ENCODE measurements at regions of chr11 and their contacts with region 1.

Region 1: DNA sequence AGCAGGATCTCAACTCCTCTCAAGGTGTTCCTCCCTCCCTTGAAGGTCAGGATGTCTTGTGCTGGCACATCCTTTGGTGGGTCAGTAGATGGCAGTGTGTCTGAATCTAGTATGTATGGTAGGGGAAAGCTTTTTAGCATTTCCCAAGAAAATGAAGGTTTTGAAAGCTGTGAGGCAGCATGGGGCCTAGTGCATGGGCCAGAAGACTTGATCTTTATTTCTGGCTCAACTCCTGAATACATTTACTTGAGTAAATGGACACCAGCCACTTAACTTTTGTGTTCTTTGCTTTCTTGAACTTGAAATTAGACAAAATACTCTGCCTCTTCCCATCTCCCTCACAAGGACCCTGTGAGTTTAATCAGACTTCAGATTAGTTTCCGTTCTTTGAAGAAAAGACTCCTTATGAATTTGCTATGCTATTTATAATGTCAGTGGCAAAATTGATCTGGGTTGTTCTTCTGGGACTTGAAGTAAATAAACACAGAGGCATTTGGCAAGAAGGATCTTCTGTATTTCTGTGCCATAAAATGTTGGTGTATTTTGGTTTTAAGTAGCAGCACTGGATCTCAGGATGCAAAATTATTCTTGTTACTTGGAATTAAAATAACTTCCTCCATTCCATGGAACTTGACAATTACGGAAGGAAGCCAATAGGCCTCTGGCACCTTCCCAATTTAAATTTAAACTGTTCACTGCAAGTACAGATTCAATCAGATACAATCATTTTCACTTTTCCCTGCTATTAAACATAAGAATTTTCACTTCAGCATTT is 288.8 kb downstream of the CASP12 start:
- DNase-seq: peak; percentile 56 to 75
- H3K4me3 ChIP-seq: no peak overlapping the region
- H3K4me3 Mint-ChIP-seq: no peak overlapping the region
- H3K27ac Mint-ChIP-seq: no peak overlapping the region
- H3K4me1 ChIP-seq: 0 out of 2 replicates have a peak, but pooled peaks cover 7% of the 10 kb centered on the region
- H3K4me1 Mint-ChIP-seq: no peaks in the 10 kb centered on the region
- H3K27me3 ChIP-seq: no peaks in the 10 kb centered on the region
- H3K27me3 Mint-ChIP-seq: no peaks in the 10 kb centered on the region
- CTCF ChIP-seq: peak; percentile 76 to 98

Region 2: GRCh38 chr11:104254347-104254746 is 355.2 kb before region 1 on chr11:
- CTCF ChIA-PET with region 1: no interaction called
- POLR2A ChIA-PET with region 1: no interaction called
- intact Hi-C with region 1: loop called (anchors 10 kb)
- DNase-seq: peak; percentile 59 to 67
- H3K4me3 ChIP-seq: no peak overlapping the region
- H3K4me3 Mint-ChIP-seq: no peak overlapping the region
- H3K27ac Mint-ChIP-seq: no peak overlapping the region
- H3K4me1 ChIP-seq: peaks cover 6% of the 10 kb centered on the region
- H3K4me1 Mint-ChIP-seq: peaks cover 16% of the 10 kb centered on the region
- H3K27me3 ChIP-seq: no peaks in the 10 kb centered on the region
- H3K27me3 Mint-ChIP-seq: no peaks in the 10 kb centered on the region
- CTCF ChIP-seq: peak; percentile 63 to 73

Region 3: GRCh38 chr11:104422315-104422944 is 187.1 kb before region 1 on chr11:
- CTCF ChIA-PET with region 1: no interaction called
- POLR2A ChIA-PET with region 1: no interaction called
- intact Hi-C with region 1: no loop called
- DNase-seq: no peak
- H3K4me3 ChIP-seq: no peak overlapping the region
- H3K4me3 Mint-ChIP-seq: no peak overlapping the region
- H3K27ac Mint-ChIP-seq: no peak overlapping the region
- H3K4me1 ChIP-seq: no peaks in the 10 kb centered on the region
- H3K4me1 Mint-ChIP-seq: no peaks in the 10 kb centered on the region
- H3K27me3 ChIP-seq: no peaks in the 10 kb centered on the region
- H3K27me3 Mint-ChIP-seq: no peaks in the 10 kb centered on the region
- CTCF ChIP-seq: no peak

Region 4: GRCh38 chr11:104668797-104669463 is 59.4 kb after region 1 on chr11:
- CTCF ChIA-PET with region 1: no interaction called
- POLR2A ChIA-PET with region 1: no interaction called
- intact Hi-C with region 1: loop called (anchors 1 kb)
- DNase-seq: peak in 1 of 2 experiments; percentile 82
- H3K4me3 ChIP-seq: no peak overlapping the region
- H3K4me3 Mint-ChIP-seq: peak overlapping the region; percentile 20
- H3K27ac Mint-ChIP-seq: peak overlapping the region; percentile 74
- H3K4me1 ChIP-seq: peaks cover 47% of the 10 kb centered on the region
- H3K4me1 Mint-ChIP-seq: peaks cover 51% of the 10 kb centered on the region
- H3K27me3 ChIP-seq: no peaks in the 10 kb centered on the region
- H3K27me3 Mint-ChIP-seq: no peaks in the 10 kb centered on the region
- CTCF ChIP-seq: no peak

Region 5: DNA sequence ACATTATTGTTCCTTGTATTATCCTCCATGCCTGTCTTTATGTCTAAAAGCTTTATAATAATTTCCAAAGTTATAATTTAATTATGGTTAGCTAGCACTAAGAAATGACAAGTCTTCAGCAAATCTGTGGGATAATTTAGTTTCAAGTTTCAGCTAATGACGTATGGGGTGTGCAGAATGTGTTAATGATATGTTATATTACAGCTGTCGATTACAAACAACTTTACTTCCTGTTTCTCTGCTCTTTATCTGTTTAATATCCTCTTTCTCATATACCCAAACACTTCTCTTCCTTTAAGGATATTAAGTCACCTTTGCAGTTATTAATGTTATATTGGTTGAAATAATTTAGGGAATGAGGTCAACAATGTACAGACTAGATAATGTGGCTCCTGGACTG is 127.0 kb after region 1 on chr11:
- CTCF ChIA-PET with region 1: no interaction called
- POLR2A ChIA-PET with region 1: no interaction called
- intact Hi-C with region 1: no loop called
- DNase-seq: no peak
- H3K4me3 ChIP-seq: no peak overlapping the region
- H3K4me3 Mint-ChIP-seq: no peak overlapping the region
- H3K27ac Mint-ChIP-seq: no peak overlapping the region
- H3K4me1 ChIP-seq: peaks cover 8% of the 10 kb centered on the region
- H3K4me1 Mint-ChIP-seq: peaks cover 7% of the 10 kb centered on the region
- H3K27me3 ChIP-seq: no peaks in the 10 kb centered on the region
- H3K27me3 Mint-ChIP-seq: no peaks in the 10 kb centered on the region
- CTCF ChIP-seq: no peak

Region 6: GRCh38 chr11:104841185-104841584 is 231.7 kb after region 1 on chr11:
- CTCF ChIA-PET with region 1: no interaction called
- POLR2A ChIA-PET with region 1: no interaction called
- intact Hi-C with region 1: loop called (anchors 1 kb)
- DNase-seq: no peak
- H3K4me3 ChIP-seq: no peak overlapping the region
- H3K4me3 Mint-ChIP-seq: no peak overlapping the region
- H3K27ac Mint-ChIP-seq: no peak overlapping the region
- H3K4me1 ChIP-seq: no peaks in the 10 kb centered on the region
- H3K4me1 Mint-ChIP-seq: no peaks in the 10 kb centered on the region
- H3K27me3 ChIP-seq: no peaks in the 10 kb centered on the region
- H3K27me3 Mint-ChIP-seq: peaks cover 6% of the 10 kb centered on the region
- CTCF ChIP-seq: peak in 1 of 2 experiments; percentile 12

Region 7: GRCh38 chr11:104968355-104968855 is 358.9 kb after region 1 on chr11 and contains the start of gene CASP4:
- CTCF ChIA-PET with region 1: no interaction called
- POLR2A ChIA-PET with region 1: no interaction called
- intact Hi-C with region 1: loop called (anchors 5 kb)
- DNase-seq: peak in 1 of 2 experiments; percentile 39
- H3K4me3 ChIP-seq: peak within 1 kb of the TSS; percentile 35
- H3K4me3 Mint-ChIP-seq: peak within 1 kb of the TSS; percentile 73
- H3K27ac Mint-ChIP-seq: peak within 1 kb of the TSS; percentile 85
- H3K4me1 ChIP-seq: peaks cover 30% of the 10 kb centered on the region
- H3K4me1 Mint-ChIP-seq: peaks cover 47% of the 10 kb centered on the region
- H3K27me3 ChIP-seq: no peaks in the 10 kb centered on the region
- H3K27me3 Mint-ChIP-seq: no peaks in the 10 kb centered on the region
- CTCF ChIP-seq: no peak
- total RNA-seq, gene CASP4: 41.7 and 42.0 TPM in 2 replicates

Region 8: DNA sequence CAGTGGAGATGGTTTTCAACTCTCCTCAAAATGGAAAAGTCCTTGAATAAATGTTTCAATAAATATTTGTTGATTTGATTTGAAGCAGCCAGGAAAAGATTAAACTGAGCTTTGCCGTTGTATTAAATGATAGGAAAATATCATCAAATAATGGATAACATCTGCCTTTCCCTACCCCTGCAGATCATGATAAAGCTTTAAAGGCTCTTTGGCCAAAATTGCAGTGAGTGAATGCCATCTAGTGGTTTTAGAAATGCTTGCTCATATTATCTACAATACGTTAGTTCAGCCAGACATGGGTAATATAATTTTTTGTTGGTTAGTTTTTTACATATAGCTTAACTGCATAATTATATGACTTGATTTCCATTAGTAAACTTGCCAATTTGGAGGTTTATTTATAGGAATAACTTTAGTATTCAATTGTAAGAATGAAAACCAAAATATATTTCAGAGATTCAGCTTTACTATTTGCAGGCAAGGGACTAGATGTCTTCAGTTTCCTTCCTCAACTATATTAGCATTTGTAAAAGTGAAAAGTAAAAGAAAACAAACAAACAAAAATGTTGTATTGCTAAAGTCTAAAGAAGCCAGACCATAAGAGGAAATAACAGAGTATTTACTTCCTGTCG is 1253.4 kb after region 1 on chr11:
- CTCF ChIA-PET with region 1: interaction called, 3 read pairs
- POLR2A ChIA-PET with region 1: no interaction called
- intact Hi-C with region 1: loop called (anchors 1 kb)
- DNase-seq: peak in 1 of 2 experiments; percentile 50
- H3K4me3 ChIP-seq: no peak overlapping the region
- H3K4me3 Mint-ChIP-seq: no peak overlapping the region
- H3K27ac Mint-ChIP-seq: no peak overlapping the region
- H3K4me1 ChIP-seq: no peaks in the 10 kb centered on the region
- H3K4me1 Mint-ChIP-seq: no peaks in the 10 kb centered on the region
- H3K27me3 ChIP-seq: no peaks in the 10 kb centered on the region
- H3K27me3 Mint-ChIP-seq: peaks cover 2% of the 10 kb centered on the region
- CTCF ChIP-seq: peak; percentile 77 to 84

Measured in Caco-2 (cell line).